B cell (primary cell): ENCODE measurements at regions of chr6 and their contacts with region 1.

Region 1: GRCh38 chr6:14316635-14317386 is 199.2 kb downstream of the CD83 start:
- DNase-seq: peak; percentile 32
- ATAC-seq: no peak
- H3K4me3 ChIP-seq: no peak overlapping the region
- H3K4me3 Mint-ChIP-seq: peak overlapping the region; percentile 32
- H3K27ac ChIP-seq: no peak overlapping the region
- H3K27ac Mint-ChIP-seq: peak overlapping the region; percentile 47
- H3K4me1 ChIP-seq: peaks cover 60 to 63% of the 10 kb centered on the region in 2 donors
- H3K4me1 Mint-ChIP-seq: peaks cover 60% of the 10 kb centered on the region
- H3K27me3 ChIP-seq: no peaks in the 10 kb centered on the region
- H3K27me3 Mint-ChIP-seq: no peaks in the 10 kb centered on the region
- CTCF ChIP-seq: no peak

Region 2: DNA sequence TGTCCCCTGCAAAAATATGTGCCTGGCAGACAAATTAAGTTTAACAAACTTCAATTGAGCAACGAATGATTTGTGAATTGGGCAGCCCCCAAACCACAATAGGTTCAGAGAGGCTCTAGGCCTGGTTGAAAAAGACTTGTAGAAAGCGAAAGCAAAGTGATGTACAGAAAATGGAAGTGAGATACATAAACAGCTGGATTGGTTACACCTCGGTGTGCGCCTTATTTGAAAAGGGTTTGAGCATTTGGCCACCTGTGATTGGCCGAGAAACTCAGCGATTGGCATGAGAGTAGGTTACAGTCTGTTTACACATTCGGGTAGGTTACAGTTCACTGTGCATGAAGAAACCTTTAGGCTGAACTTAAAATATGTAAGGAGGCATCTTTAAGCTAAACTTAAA is 62.3 kb before region 1 on chr6:
- CTCF ChIA-PET with region 1: no interaction called
- POLR2A ChIA-PET with region 1: no interaction called
- intact Hi-C with region 1: loop called (anchors 10 kb)
- DNase-seq: peak; percentile 76
- ATAC-seq: peak; percentile 85
- H3K4me3 ChIP-seq: peak overlapping the region in 1 of 5 experiments; percentile 0
- H3K4me3 Mint-ChIP-seq: peak overlapping the region; percentile 70
- H3K27ac ChIP-seq: peak overlapping the region; percentile 82 to 84
- H3K27ac Mint-ChIP-seq: peak overlapping the region; percentile 86
- H3K4me1 ChIP-seq: peaks cover 35 to 42% of the 10 kb centered on the region in 2 donors
- H3K4me1 Mint-ChIP-seq: peaks cover 49% of the 10 kb centered on the region
- H3K27me3 ChIP-seq: no peaks in the 10 kb centered on the region
- H3K27me3 Mint-ChIP-seq: no peaks in the 10 kb centered on the region
- CTCF ChIP-seq: no peak

Region 3: GRCh38 chr6:14524319-14524718 is 207.5 kb after region 1 on chr6:
- CTCF ChIA-PET with region 1: no interaction called
- POLR2A ChIA-PET with region 1: no interaction called
- intact Hi-C with region 1: no loop called
- DNase-seq: no peak
- ATAC-seq: no peak
- H3K4me3 ChIP-seq: no peak overlapping the region
- H3K4me3 Mint-ChIP-seq: no peak overlapping the region
- H3K27ac ChIP-seq: no peak overlapping the region
- H3K27ac Mint-ChIP-seq: no peak overlapping the region
- H3K4me1 ChIP-seq: no peaks in the 10 kb centered on the region
- H3K4me1 Mint-ChIP-seq: peaks cover 1% of the 10 kb centered on the region
- H3K27me3 ChIP-seq: no peaks in the 10 kb centered on the region
- H3K27me3 Mint-ChIP-seq: no peaks in the 10 kb centered on the region
- CTCF ChIP-seq: no peak